ENCODE measurements at regions of chr1 and their contacts with region 1.

Region 1: DNA sequence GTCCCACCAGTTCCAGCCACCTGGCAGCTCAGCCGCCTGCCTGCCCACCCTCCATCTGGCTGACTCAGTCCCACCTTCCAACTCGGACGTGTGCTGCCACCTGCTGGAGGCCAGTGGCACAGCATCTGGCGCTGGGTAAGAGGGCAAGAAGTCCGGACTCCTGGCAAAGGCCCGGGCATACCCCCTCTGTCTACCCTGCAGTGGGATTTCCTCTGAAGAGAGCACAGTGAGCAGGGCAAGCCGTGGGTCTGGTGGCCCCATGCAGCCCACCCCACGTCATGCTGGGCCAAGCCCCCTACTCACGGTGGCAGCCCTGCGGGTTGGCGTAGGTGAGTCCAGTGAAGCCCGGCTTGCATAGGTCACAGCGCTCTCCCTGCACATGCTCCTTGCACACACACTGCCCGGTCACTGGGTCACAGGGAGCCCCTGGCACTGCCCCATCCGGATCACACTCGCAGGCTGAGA is 24.5 kb downstream of the LAMB3 start:
- DNase-seq: peak; percentile 53 to 74
- H3K4me3 ChIP-seq: no peak overlapping the region
- H3K4me3 Mint-ChIP-seq: no peak overlapping the region
- H3K27ac Mint-ChIP-seq: no peak overlapping the region
- H3K4me1 ChIP-seq: no peaks in the 10 kb centered on the region
- H3K4me1 Mint-ChIP-seq: no peaks in the 10 kb centered on the region
- H3K27me3 ChIP-seq: no peaks in the 10 kb centered on the region
- H3K27me3 Mint-ChIP-seq: no peaks in the 10 kb centered on the region
- CTCF ChIP-seq: peak; percentile 93 to 94

Region 2: GRCh38 chr1:209490013-209490412 is 137.8 kb before region 1 on chr1:
- CTCF ChIA-PET with region 1: no interaction called
- POLR2A ChIA-PET with region 1: no interaction called
- intact Hi-C with region 1: no loop called
- DNase-seq: no peak
- H3K4me3 ChIP-seq: no peak overlapping the region
- H3K4me3 Mint-ChIP-seq: no peak overlapping the region
- H3K27ac Mint-ChIP-seq: no peak overlapping the region
- H3K4me1 ChIP-seq: no peaks in the 10 kb centered on the region
- H3K4me1 Mint-ChIP-seq: no peaks in the 10 kb centered on the region
- H3K27me3 ChIP-seq: no peaks in the 10 kb centered on the region
- H3K27me3 Mint-ChIP-seq: peaks cover 6% of the 10 kb centered on the region
- CTCF ChIP-seq: peak; percentile 46 to 60

Region 3: DNA sequence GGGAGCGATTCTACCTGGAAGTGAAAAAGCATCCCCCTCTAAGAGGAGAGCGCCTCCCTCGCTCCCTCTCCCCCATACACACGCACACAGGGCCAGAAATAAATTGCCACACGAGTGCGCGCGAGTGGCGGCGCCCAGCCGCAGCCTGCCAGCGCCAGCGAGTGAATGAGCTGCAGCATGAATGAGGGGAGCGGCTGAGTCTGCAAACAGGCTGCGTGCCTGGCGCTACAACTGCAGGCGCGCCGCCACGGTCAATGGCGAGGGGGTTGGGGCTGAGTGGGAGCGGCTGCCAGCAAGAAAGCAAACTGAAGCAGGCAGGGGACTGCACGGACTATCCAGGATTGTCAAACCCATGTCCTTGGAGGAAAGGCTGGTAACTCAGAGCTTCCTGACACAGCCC is 42.1 kb before region 1 on chr1:
- CTCF ChIA-PET with region 1: no interaction called
- POLR2A ChIA-PET with region 1: no interaction called
- intact Hi-C with region 1: no loop called
- DNase-seq: peak in 1 of 2 experiments; percentile 36
- H3K4me3 ChIP-seq: no peak overlapping the region
- H3K4me3 Mint-ChIP-seq: peak overlapping the region; percentile 36
- H3K27ac Mint-ChIP-seq: no peak overlapping the region
- H3K4me1 ChIP-seq: peaks cover 4% of the 10 kb centered on the region; the same call in 1 of the 2 replicates
- H3K4me1 Mint-ChIP-seq: no peaks in the 10 kb centered on the region
- H3K27me3 ChIP-seq: no peaks in the 10 kb centered on the region; the same call in 1 of the 2 replicates
- H3K27me3 Mint-ChIP-seq: peaks cover 3% of the 10 kb centered on the region
- CTCF ChIP-seq: peak in 1 of 2 experiments; percentile 8

Region 4: DNA sequence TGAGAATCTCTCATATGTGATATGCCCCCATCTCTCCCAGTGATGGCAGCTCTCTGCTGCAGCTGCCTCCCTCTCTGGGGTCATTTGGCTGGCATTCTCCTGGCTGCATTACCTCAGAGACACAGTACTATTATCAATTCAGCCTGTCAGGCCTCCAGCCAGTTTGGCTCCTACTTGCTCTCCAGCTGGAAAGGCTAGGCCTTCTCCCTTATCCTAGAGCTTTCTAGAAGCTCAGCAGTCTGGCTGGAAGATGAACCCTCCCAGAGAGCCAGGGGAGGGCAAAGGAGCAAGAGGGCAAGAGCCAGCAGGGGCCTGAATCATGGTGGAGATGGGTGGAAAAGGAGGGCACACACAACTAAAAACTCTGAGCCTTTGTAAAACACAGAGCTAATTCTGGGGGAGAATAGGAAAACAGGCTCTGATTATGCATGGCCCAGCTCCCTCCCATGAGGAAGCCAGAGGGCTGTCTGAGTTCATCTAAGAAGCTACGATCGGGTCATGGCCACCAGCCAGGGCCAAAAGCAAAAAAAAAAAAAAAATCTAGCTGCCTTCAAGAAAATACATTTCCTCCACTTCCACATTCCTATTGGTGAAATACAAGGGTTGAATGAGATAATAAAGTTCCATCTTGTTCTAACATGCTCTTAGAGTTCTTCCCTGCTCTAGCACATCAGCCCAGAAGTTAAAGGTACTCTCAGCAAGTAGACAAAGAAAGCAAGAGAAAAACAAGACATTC is 15.7 kb after region 1 on chr1:
- CTCF ChIA-PET with region 1: interaction called, 11 read pairs
- POLR2A ChIA-PET with region 1: no interaction called
- intact Hi-C with region 1: no loop called
- DNase-seq: no peak
- H3K4me3 ChIP-seq: no peak overlapping the region
- H3K4me3 Mint-ChIP-seq: no peak overlapping the region
- H3K27ac Mint-ChIP-seq: no peak overlapping the region
- H3K4me1 ChIP-seq: peaks cover 26% of the 10 kb centered on the region
- H3K4me1 Mint-ChIP-seq: peaks cover 38% of the 10 kb centered on the region
- H3K27me3 ChIP-seq: no peaks in the 10 kb centered on the region
- H3K27me3 Mint-ChIP-seq: no peaks in the 10 kb centered on the region
- CTCF ChIP-seq: no peak

Region 5: DNA sequence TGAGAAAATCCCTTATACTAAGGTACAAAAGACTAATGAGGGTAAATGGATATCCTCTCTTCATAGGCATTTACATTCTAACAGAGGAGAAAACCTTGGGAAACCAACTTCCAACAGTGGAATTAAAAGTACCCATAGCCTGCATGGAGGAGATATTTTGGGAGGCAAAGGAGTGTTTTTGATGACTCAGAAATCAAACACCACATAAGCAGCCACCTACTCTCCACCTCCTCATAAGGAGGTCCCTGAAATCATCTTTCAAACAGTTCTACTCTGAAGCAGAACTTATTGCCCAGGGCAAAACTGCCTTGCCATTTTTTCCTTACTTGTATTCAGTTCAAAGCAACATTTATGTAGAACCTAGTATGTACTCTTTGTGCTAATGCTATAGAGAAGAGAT is 1294.9 kb after region 1 on chr1:
- CTCF ChIA-PET with region 1: no interaction called
- POLR2A ChIA-PET with region 1: no interaction called
- intact Hi-C with region 1: no loop called
- DNase-seq: no peak
- H3K4me3 ChIP-seq: no peak overlapping the region
- H3K4me3 Mint-ChIP-seq: no peak overlapping the region
- H3K27ac Mint-ChIP-seq: no peak overlapping the region
- H3K4me1 ChIP-seq: no peaks in the 10 kb centered on the region
- H3K4me1 Mint-ChIP-seq: no peaks in the 10 kb centered on the region
- H3K27me3 ChIP-seq: no peaks in the 10 kb centered on the region; the same call in 1 of the 2 replicates
- H3K27me3 Mint-ChIP-seq: peaks cover 10% of the 10 kb centered on the region
- CTCF ChIP-seq: no peak